ENCODE measurements at regions of chr6 and their contacts with region 1.

Region 1: GRCh38 chr6:30717042-30717844 is at the start of gene MDC1:
- DNase-seq: peak; percentile 99 to 100 (median 100)
- H3K4me3 ChIP-seq: peak within 1 kb of the TSS; percentile 67 to 80
- H3K4me3 Mint-ChIP-seq: peak within 1 kb of the TSS; percentile 88 to 99 (median 98)
- H3K27ac ChIP-seq: peak within 1 kb of the TSS; percentile 69
- H3K27ac Mint-ChIP-seq: peak within 1 kb of the TSS; percentile 96 to 100 (median 98)
- H3K4me1 ChIP-seq: peaks cover 40% of the 10 kb centered on the region
- H3K4me1 Mint-ChIP-seq: peaks cover 22 to 70% (median 44%) of the 10 kb centered on the region in 4 donors
- H3K27me3 ChIP-seq: no peaks in the 10 kb centered on the region
- H3K27me3 Mint-ChIP-seq: no peaks in the 10 kb centered on the region
- total RNA-seq, gene MDC1: 60.7 to 73.5 TPM

Region 2: GRCh38 chr6:30489081-30490025 is 227.9 kb before region 1 on chr6 and contains the start of gene HLA-E:
- CTCF ChIA-PET with region 1: interaction called, 4 read pairs
- POLR2A ChIA-PET with region 1: interaction called, 45 read pairs
- intact Hi-C with region 1: loop called (anchors 2 kb)
- DNase-seq: peak; percentile 92 to 98 (median 96)
- H3K4me3 ChIP-seq: peak within 1 kb of the TSS; percentile 98 to 99
- H3K4me3 Mint-ChIP-seq: peak within 1 kb of the TSS; percentile 98 to 99 (median 99)
- H3K27ac ChIP-seq: peak within 1 kb of the TSS; percentile 95
- H3K27ac Mint-ChIP-seq: peak within 1 kb of the TSS; percentile 97 to 99 (median 99)
- H3K4me1 ChIP-seq: peaks cover 30% of the 10 kb centered on the region
- H3K4me1 Mint-ChIP-seq: peaks cover 28 to 60% (median 44%) of the 10 kb centered on the region in 4 donors
- H3K27me3 ChIP-seq: no peaks in the 10 kb centered on the region
- H3K27me3 Mint-ChIP-seq: no peaks in the 10 kb centered on the region
- total RNA-seq, gene HLA-E: 1,097 to 1,122 TPM

Region 3: DNA sequence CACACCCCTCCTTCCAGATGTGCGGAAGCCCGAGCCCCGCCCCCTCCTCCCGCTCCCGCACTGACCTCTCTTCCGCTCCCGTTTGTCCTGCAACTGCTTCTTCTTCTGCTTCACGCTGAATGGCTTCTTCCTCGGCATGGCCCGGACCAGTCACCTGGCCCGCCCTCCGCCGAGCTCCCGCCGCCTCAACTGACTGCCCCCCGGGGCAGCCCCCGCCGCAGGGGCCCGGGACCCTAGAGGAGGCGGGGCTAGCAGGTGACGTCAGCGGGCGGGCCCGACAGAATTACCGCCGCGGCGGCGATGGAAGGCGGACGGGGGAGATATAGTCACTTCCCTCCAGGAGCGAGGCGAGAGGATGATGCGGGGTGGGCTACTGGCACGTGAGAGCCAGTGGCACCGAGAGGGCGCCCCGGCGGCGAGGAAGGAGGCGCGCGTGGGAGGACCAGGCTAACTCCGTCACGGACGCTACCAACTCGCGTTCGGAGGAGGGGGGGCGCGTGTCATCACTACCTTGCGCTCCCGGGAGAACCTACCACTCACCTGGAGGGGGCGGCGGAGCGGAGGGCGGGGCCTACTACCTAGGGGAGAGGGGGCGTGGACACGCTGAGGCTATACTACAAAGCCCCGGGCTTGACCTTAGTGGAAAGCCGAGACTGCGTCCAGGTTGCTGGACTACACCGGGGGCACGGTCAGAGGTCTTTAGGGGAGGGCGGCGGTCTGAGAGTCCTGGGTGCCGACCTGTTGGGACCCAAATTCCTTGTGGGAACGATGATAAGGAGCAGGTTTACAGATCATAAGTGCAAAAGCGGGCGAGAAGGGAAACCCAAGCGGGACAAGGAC is 161.0 kb before region 1 on chr6 and contains the start of gene GNL1:
- CTCF ChIA-PET with region 1: interaction called, 3 read pairs
- POLR2A ChIA-PET with region 1: interaction called, 8 read pairs
- intact Hi-C with region 1: loop called (anchors 1 kb)
- DNase-seq: peak; percentile 98 to 99 (median 99)
- H3K4me3 ChIP-seq: peak within 1 kb of the TSS; percentile 79 to 99
- H3K4me3 Mint-ChIP-seq: peak within 1 kb of the TSS; percentile 97 to 100 (median 99)
- H3K27ac ChIP-seq: peak within 1 kb of the TSS; percentile 96
- H3K27ac Mint-ChIP-seq: peak within 1 kb of the TSS; percentile 97 to 100 (median 100)
- H3K4me1 ChIP-seq: peaks cover 30% of the 10 kb centered on the region
- H3K4me1 Mint-ChIP-seq: peaks cover 26 to 65% (median 38%) of the 10 kb centered on the region in 4 donors
- H3K27me3 ChIP-seq: no peaks in the 10 kb centered on the region
- H3K27me3 Mint-ChIP-seq: peaks cover 0 to 1% of the 10 kb centered on the region in 2 donors
- total RNA-seq, gene GNL1: 83.4 to 83.9 TPM

Region 4: GRCh38 chr6:30626484-30627366 is 90.5 kb before region 1 on chr6 and contains the start of gene ATAT1:
- CTCF ChIA-PET with region 1: interaction called, 19 read pairs
- POLR2A ChIA-PET with region 1: interaction called, 4 read pairs
- intact Hi-C with region 1: loop called (anchors 1 kb)
- DNase-seq: peak; percentile 85 to 94 (median 86)
- H3K4me3 ChIP-seq: peak within 1 kb of the TSS; percentile 5 to 78
- H3K4me3 Mint-ChIP-seq: peak within 1 kb of the TSS; percentile 91 to 95 (median 92)
- H3K27ac ChIP-seq: peak within 1 kb of the TSS; percentile 89
- H3K27ac Mint-ChIP-seq: peak within 1 kb of the TSS; percentile 91 to 99 (median 97)
- H3K4me1 ChIP-seq: peaks cover 14% of the 10 kb centered on the region
- H3K4me1 Mint-ChIP-seq: peaks cover 18 to 30% (median 24%) of the 10 kb centered on the region in 4 donors
- H3K27me3 ChIP-seq: no peaks in the 10 kb centered on the region
- H3K27me3 Mint-ChIP-seq: no peaks in the 10 kb centered on the region
- total RNA-seq, gene ATAT1: 8.3 to 9.4 TPM

Region 5: GRCh38 chr6:30672445-30673253 is 44.6 kb before region 1 on chr6 and contains the start of gene DHX16:
- CTCF ChIA-PET with region 1: interaction called, 865 read pairs
- POLR2A ChIA-PET with region 1: interaction called, 1,474 read pairs
- intact Hi-C with region 1: no loop called
- DNase-seq: peak; percentile 84 to 89 (median 87)
- H3K4me3 ChIP-seq: peak within 1 kb of the TSS; percentile 89 to 95
- H3K4me3 Mint-ChIP-seq: peak within 1 kb of the TSS; percentile 80 to 94 (median 90)
- H3K27ac ChIP-seq: peak within 1 kb of the TSS; percentile 77
- H3K27ac Mint-ChIP-seq: peak within 1 kb of the TSS; percentile 69 to 97 (median 94)
- H3K4me1 ChIP-seq: peaks cover 20% of the 10 kb centered on the region
- H3K4me1 Mint-ChIP-seq: peaks cover 19 to 51% (median 35%) of the 10 kb centered on the region in 4 donors
- H3K27me3 ChIP-seq: no peaks in the 10 kb centered on the region
- H3K27me3 Mint-ChIP-seq: no peaks in the 10 kb centered on the region
- total RNA-seq, gene DHX16: 53.4 to 54.6 TPM

Region 6: DNA sequence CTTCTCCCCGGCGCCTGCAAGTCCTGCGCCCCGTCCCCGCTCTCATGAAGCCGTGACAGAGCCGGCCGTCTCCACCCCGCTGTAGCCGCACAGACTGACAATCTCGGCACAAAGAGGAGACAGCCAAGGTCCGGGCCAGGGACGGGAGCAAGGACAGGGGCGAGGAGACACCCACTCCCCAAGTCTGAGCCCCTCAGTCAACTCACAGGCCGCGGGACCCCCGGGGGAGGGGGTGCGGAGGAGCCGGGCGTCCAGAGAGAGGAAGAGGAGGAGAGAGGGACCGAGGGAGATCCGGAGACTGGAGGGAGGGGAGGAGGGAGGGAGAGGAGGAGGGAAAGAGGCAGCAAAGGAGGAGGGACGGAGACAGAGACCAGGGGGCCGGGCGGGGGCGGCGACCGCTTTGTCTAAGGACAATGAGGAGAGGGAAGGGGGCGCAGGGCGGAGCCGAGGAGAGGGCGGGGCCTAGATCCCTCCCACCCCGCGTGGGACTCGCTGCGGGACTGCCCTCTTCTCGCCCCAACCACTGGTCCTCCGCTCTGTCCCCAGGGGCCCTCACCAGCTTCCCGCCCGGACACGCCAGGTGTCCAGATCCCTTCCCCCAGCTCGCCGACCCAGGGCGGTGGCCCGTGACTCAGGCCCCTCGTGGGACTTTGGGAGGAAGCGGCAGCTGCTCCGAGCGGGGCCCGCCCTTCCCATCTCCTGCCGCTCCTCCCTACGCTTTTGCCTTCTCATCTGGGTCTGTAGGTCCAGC is 30.2 kb before region 1 on chr6:
- CTCF ChIA-PET with region 1: interaction called, 865 read pairs
- POLR2A ChIA-PET with region 1: interaction called, 1,474 read pairs
- intact Hi-C with region 1: loop called (anchors 1 kb)
- DNase-seq: peak in 4 of 5 donors; percentile 43 to 83 (median 45)
- H3K4me3 ChIP-seq: peak overlapping the region; percentile 93 to 100
- H3K4me3 Mint-ChIP-seq: peak overlapping the region; percentile 97 to 100 (median 99)
- H3K27ac ChIP-seq: peak overlapping the region; percentile 94
- H3K27ac Mint-ChIP-seq: peak overlapping the region; percentile 94 to 99 (median 96)
- H3K4me1 ChIP-seq: peaks cover 40% of the 10 kb centered on the region
- H3K4me1 Mint-ChIP-seq: peaks cover 32 to 71% (median 40%) of the 10 kb centered on the region in 4 donors
- H3K27me3 ChIP-seq: no peaks in the 10 kb centered on the region
- H3K27me3 Mint-ChIP-seq: no peaks in the 10 kb centered on the region

Region 7: DNA sequence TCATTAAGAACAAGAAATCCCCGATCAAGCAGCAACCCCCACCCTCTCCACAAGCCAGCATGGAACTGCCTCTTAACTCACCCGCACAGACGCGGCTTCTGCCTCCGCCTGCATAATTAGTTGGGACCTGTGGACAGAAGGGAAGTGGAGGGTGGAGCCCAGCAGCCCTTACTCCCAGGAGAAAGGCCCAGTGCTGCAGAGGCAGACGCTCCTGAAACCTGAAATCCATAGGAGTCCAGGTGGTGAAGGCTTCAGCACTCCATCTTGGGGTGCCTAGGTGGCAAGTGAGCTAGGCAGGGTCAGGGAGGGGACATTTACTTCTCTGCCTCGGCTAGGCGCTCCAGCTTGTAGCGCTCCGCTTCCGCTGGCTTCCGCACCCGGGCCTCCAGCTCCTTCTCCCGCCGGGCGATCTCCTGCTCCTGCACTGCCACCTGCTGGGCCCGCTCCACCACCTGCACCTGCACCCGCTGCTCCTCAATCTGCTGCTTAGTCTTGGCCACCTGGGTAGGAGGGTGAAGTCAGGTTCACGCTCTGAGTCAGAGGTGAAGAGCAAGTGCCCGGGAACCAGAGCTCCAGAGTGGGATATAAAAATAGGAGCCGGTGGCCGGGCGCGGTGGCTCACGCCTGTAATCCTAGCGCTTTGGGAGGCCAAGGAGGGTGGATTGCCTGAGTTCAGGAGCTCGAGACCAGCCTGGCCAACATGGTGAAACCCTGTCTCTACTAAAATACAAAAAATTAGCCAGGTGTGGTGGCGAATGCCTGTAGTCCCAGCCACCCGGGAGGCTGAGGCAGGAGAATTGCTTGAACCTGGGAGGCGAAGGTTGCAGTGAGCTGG is 13.6 kb after region 1 on chr6:
- CTCF ChIA-PET with region 1: interaction called, 53 read pairs
- POLR2A ChIA-PET with region 1: interaction called, 61 read pairs
- intact Hi-C with region 1: loop called (anchors 1 kb)
- DNase-seq: peak; percentile 81 to 86 (median 82)
- H3K4me3 ChIP-seq: peak overlapping the region in 1 of 2 donors; percentile 35
- H3K4me3 Mint-ChIP-seq: peak overlapping the region in 6 of 8 donors; percentile 43 to 72 (median 58)
- H3K27ac ChIP-seq: no peak overlapping the region
- H3K27ac Mint-ChIP-seq: peak overlapping the region in 5 of 7 donors; percentile 69 to 84 (median 73)
- H3K4me1 ChIP-seq: peaks cover 23% of the 10 kb centered on the region
- H3K4me1 Mint-ChIP-seq: peaks cover 16 to 40% (median 31%) of the 10 kb centered on the region in 4 donors
- H3K27me3 ChIP-seq: no peaks in the 10 kb centered on the region
- H3K27me3 Mint-ChIP-seq: no peaks in the 10 kb centered on the region

Measured in CD4-positive, alpha-beta memory T cell (primary cell).